ENCODE measurements at regions of chr20 and their contacts with region 1.

Region 1: DNA sequence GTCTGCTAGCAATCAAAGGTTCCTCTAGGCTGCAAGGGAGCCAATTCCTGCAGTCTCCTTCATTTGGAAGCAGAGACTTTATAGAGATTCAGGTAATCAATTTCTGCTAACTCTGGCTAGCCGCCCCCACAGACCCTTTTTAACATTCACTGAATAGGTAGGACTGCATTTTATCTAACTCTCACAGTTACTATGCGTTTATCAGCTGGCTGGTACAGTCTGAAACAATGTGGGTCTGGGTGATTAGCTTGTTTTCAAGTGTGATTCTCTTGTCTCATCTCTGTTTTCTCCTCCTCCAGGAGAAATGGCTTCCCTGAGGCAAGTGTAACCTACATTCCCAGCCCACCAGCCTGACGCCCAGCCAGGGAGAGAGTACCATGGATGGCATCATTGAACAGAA is 73.3 kb downstream of the SYNDIG1 start:
- DNase-seq: no peak

Region 2: DNA sequence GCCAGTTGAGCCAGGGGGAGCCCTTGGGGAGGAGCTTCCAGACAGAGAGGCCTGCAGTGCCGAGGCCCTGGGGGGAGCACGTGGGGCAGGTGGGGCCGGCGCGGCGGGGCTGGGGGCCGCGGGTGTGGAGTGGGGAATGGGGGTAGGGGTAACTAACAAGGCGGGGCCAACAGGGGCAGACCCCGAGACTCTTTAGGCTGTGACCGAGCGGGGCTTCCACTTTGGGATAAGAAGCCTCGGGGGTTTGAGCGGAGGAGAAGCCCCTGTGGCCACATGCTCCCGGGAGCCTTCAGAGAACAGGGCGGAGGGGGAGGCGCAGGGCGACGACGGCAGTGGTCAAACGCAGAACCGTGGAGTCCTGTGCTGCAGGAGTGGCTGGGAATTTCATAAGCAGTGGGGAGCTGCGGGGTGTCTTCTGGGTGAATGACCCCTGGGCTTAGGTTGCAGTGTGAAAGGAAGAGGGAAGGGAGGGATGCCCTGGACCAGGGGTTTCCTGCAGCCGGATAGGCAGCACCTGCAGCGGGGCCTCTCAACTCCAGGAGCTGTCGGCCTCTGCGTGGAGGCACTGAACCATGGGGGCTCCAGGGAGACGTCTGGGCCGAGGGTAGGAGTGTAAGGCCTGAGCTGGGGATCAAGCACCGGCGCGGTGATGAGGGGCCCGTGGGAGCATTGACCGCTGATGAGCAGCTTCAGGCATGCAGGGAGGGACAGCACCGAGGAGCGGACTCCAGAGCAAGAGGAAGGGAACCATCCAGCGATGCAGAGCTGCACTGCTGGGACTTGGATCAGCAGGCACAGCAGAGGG is 47.7 kb after region 1 on chr20:
- intact Hi-C with region 1: loop called (anchors 5 kb)
- DNase-seq: no peak